Mucosa of descending colon (tissue), 3 donors: ENCODE measurements at regions of chr5 and their contacts with region 1.

Region 1: DNA sequence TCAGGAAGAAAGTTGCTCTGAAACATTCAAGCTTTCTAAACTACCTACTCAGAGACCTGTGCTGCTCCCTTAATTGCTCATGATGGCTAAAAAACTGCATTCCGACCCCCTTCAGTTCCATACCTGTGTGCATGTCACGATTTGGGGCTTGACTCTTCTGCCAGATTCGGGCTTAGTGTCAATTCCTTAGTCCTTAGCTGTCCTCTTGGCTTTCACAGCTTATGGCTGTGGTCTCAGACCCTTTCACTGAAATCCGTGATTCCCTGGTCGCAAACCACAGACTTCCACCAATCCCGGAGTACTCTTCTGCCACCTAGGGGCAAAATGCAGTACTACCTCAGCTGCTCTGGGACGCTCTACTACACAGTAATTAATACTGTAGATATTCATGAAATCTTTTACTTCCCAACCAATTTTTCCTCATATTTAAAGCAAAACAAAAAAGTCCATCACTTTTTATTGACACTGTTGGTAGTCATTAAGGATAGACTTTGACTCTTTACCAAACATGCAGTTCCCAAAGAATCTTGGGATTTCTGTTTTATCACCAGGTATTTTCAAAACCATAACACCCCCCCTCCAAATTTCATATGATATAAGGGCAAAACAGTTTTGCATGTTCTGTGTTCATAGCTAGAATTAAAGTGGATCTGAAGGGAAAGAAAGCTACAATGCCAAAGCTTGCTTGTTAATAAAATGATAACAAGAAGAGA is 617.4 kb downstream of the SLCO4C1 start:
- DNase-seq: peak in 2 of 3 donors; percentile 27 to 81
- ATAC-seq: peak; percentile 77
- H3K4me3 ChIP-seq: no peak overlapping the region
- H3K4me1 ChIP-seq: no peaks in the 10 kb centered on the region
- CTCF ChIP-seq: peak; percentile 81

Region 2: DNA sequence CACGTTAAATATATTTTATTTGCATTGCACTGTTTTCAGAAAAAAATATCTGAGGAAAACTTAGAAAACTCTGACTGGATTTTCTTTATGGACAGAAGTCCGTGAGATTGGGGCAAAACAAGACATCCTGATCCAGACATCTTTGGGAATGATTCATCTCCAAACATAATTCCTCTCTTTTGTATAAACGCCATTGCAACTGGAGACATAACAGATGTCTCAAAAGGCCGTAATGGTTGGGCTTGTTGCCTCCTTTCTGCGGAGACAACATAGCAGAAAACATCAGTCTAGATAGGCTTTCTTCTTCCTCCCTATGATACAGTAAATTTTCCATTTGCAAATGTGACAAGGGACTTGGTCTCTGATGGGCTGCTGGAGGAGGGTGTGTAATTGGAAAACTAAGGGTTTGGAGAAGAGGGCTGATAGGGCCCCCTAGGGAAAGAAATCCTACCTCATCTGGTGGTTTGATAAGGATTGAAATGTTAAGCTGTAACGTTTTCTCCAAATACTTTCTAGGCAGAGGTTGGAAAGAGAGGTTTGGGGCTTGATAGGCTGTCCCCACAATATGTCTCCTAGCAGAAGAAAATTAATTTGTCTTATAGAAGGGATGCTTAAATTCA is 144.0 kb before region 1 on chr5:
- intact Hi-C with region 1: loop called in 1 of 2 experiments (anchors 10 kb)
- DNase-seq: no peak
- ATAC-seq: no peak
- H3K4me3 ChIP-seq: no peak overlapping the region
- H3K4me1 ChIP-seq: no peaks in the 10 kb centered on the region
- CTCF ChIP-seq: no peak